K562 (cell line): ENCODE measurements at regions of chr1 and their contacts with region 1.

Region 1: DNA sequence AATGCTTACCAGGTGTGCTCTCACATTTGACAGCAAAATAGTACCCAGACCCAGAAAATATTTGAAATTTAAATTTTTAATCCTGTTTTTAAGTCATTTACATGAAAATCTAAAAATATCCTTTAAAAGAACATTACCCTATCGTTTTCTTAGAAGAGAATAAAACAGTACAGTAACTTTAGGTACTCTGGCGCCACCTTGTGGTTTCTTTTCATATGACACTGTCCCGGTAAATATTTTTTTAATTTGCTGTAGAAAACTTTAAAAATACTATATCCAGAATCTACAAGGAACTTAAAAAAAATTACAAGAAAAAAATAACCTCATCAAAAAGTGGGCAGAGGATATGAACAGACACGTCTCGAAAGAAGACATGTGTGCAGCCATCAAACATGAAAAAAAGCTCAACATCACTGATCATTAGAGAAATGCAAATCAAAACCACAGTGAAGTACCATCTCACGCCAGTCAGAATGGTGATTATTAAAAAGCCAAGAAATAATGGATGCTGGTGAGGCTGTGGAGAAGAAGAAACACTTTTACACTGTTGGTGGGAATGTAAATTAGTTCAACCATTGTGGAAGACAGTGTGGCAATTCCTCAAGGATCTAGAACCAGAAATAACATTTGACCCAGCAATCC is 129.2 kb downstream of the RGS21 start:
- DNase-seq: peak; percentile 19 to 71 (median 34)
- ATAC-seq: peak; percentile 63
- H3K4me3 ChIP-seq: no peak overlapping the region
- H3K27ac ChIP-seq: no peak overlapping the region
- H3K4me1 ChIP-seq: no peaks in the 10 kb centered on the region
- H3K27me3 ChIP-seq: no peaks in the 10 kb centered on the region
- CTCF ChIP-seq: peak; percentile 38 to 91 (median 48); a peak in 4 of 6 replicates
- EP300 ChIP-seq: no peak
- POLR2A ChIP-seq: no peak
- RAD21 ChIP-seq: peak; percentile 86 to 92

Region 2: GRCh38 chr1:191561276-191561675 is 884.7 kb before region 1 on chr1:
- CTCF ChIA-PET with region 1: no interaction called
- POLR2A ChIA-PET with region 1: no interaction called
- in situ Hi-C with region 1: no loop called
- intact Hi-C with region 1: loop called (anchors 10 kb)
- DNase-seq: no peak
- ATAC-seq: no peak
- H3K4me3 ChIP-seq: no peak overlapping the region
- H3K27ac ChIP-seq: no peak overlapping the region
- H3K4me1 ChIP-seq: no peaks in the 10 kb centered on the region; a peak in 2 of 5 replicates
- H3K27me3 ChIP-seq: no peaks in the 10 kb centered on the region
- CTCF ChIP-seq: no peak
- EP300 ChIP-seq: no peak
- POLR2A ChIP-seq: no peak
- RAD21 ChIP-seq: no peak

Region 3: DNA sequence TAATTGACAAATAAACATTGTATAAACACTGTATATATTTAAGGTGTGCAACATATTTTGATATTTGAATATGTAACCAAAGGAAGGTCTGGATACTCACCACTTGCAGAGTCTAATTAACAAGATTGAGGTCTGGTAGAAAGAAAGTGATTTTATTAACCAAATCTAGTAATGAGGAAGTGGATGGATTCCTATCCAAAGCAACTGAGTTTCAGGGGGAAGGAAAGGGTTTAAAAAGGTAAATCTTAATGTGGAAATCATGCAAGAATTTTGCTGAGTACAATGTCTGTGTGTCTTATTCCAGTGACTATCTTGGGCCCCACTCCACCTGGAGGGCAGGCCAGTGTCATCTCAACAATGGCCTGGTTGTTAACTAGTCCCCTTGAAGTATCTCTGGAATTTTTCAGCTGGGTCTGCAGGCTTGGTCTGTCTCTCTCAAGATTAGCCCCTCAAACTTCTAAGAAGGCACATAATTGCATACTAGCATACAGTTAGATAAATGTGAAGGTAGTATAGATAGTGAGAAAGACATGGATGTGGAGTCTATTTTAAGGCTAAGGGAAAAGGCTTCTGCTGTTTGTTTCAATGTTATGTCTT is 550.4 kb before region 1 on chr1:
- CTCF ChIA-PET with region 1: no interaction called
- POLR2A ChIA-PET with region 1: no interaction called
- in situ Hi-C with region 1: no loop called
- intact Hi-C with region 1: loop called (anchors 10 kb)
- DNase-seq: no peak
- ATAC-seq: peak; percentile 74
- H3K4me3 ChIP-seq: no peak overlapping the region
- H3K27ac ChIP-seq: no peak overlapping the region
- H3K4me1 ChIP-seq: no peaks in the 10 kb centered on the region
- H3K27me3 ChIP-seq: no peaks in the 10 kb centered on the region
- CTCF ChIP-seq: no peak
- EP300 ChIP-seq: no peak
- POLR2A ChIP-seq: no peak
- RAD21 ChIP-seq: no peak

Region 4: DNA sequence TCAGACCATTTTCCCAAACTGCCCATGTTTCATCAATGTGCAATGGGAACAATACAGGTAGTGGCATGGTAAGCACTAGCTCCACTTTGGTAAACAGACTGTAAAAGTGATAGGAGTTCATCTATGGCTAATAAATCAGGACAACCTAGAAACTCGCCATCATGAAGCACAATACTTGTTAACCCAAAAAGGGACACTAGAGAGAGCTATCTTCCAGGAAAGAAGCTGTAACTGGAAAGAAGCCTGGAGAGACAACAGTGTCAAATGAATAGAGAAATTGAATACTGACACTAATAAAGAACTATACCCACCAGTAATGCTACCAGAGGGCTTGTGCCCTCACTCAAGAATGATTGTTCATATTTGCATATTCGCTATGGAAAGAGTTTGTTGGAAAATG is 452.4 kb before region 1 on chr1:
- CTCF ChIA-PET with region 1: interaction called, 6 read pairs
- POLR2A ChIA-PET with region 1: no interaction called
- in situ Hi-C with region 1: no loop called
- intact Hi-C with region 1: loop called (anchors 1 kb)
- DNase-seq: peak in 1 of 4 experiments; percentile 27
- ATAC-seq: peak; percentile 78
- H3K4me3 ChIP-seq: no peak overlapping the region
- H3K27ac ChIP-seq: no peak overlapping the region
- H3K4me1 ChIP-seq: no peaks in the 10 kb centered on the region
- H3K27me3 ChIP-seq: no peaks in the 10 kb centered on the region
- CTCF ChIP-seq: peak; percentile 33 to 40 (median 39); a peak in 3 of 6 replicates
- EP300 ChIP-seq: no peak
- POLR2A ChIP-seq: no peak
- RAD21 ChIP-seq: peak in 1 of 2 experiments; percentile 81; a peak in 3 of 4 replicates

Region 5: DNA sequence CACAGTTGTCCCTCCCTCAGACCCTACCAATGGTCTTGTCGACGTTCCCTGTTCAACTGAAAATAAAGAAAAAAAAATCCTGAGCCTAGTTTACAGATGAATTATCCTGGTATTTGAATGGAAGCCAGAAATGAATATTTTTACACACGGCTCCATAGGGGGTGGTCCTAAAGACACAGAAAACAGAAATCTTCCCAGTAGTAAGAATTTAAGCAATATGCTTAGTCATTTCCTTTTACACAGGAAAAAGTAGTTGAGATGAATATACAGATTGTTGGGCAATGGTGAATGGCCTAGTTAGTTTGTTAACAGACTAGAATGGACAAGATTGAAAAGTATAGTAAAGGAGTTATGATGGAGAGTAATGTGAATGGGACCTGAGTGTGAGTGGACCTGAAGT is 220.3 kb before region 1 on chr1:
- CTCF ChIA-PET with region 1: no interaction called
- POLR2A ChIA-PET with region 1: no interaction called
- in situ Hi-C with region 1: no loop called
- intact Hi-C with region 1: loop called (anchors 5 kb)
- DNase-seq: no peak
- ATAC-seq: peak; percentile 32; the same call in 1 of the 3 replicates
- H3K4me3 ChIP-seq: no peak overlapping the region
- H3K27ac ChIP-seq: no peak overlapping the region; the same call in 2 of the 3 replicates
- H3K4me1 ChIP-seq: no peaks in the 10 kb centered on the region
- H3K27me3 ChIP-seq: no peaks in the 10 kb centered on the region
- CTCF ChIP-seq: no peak
- EP300 ChIP-seq: no peak
- POLR2A ChIP-seq: no peak
- RAD21 ChIP-seq: no peak

Region 6: GRCh38 chr1:192311281-192311680 is 134.7 kb before region 1 on chr1:
- CTCF ChIA-PET with region 1: no interaction called
- POLR2A ChIA-PET with region 1: no interaction called
- in situ Hi-C with region 1: no loop called
- intact Hi-C with region 1: loop called (anchors 1 kb)
- DNase-seq: peak in 2 of 4 experiments; percentile 28 to 56
- ATAC-seq: peak; percentile 72
- H3K4me3 ChIP-seq: no peak overlapping the region
- H3K27ac ChIP-seq: no peak overlapping the region
- H3K4me1 ChIP-seq: no peaks in the 10 kb centered on the region
- H3K27me3 ChIP-seq: no peaks in the 10 kb centered on the region
- CTCF ChIP-seq: peak in 2 of 3 experiments; percentile 45 to 62; a peak in 3 of 6 replicates
- EP300 ChIP-seq: no peak
- POLR2A ChIP-seq: no peak
- RAD21 ChIP-seq: peak; percentile 68 to 82

Region 7: GRCh38 chr1:192418552-192419285 is 27.2 kb before region 1 on chr1:
- CTCF ChIA-PET with region 1: no interaction called
- POLR2A ChIA-PET with region 1: no interaction called
- in situ Hi-C with region 1: no loop called
- intact Hi-C with region 1: no loop called
- DNase-seq: no peak
- ATAC-seq: no peak
- H3K4me3 ChIP-seq: no peak overlapping the region
- H3K27ac ChIP-seq: no peak overlapping the region
- H3K4me1 ChIP-seq: no peaks in the 10 kb centered on the region
- H3K27me3 ChIP-seq: no peaks in the 10 kb centered on the region
- CTCF ChIP-seq: no peak
- EP300 ChIP-seq: no peak
- POLR2A ChIP-seq: no peak
- RAD21 ChIP-seq: no peak